ENCODE measurements at regions of chr5 and their contacts with region 1.

Region 1: GRCh38 chr5:166992874-166993722 is 1298.3 kb upstream of the WWC1 start:
- DNase-seq: no peak
- H3K4me3 ChIP-seq: peak overlapping the region in 3 of 4 donors; percentile 11 to 32 (median 12)
- H3K27ac ChIP-seq: peak overlapping the region; percentile 52 to 79 (median 68)
- H3K4me1 ChIP-seq: peaks cover 0 to 35% (median 29%) of the 10 kb centered on the region in 4 donors
- H3K27me3 ChIP-seq: no peaks in the 10 kb centered on the region
- CTCF ChIP-seq: no peak
- EP300 ChIP-seq: no peak
- POLR2A ChIP-seq: no peak

Region 2: DNA sequence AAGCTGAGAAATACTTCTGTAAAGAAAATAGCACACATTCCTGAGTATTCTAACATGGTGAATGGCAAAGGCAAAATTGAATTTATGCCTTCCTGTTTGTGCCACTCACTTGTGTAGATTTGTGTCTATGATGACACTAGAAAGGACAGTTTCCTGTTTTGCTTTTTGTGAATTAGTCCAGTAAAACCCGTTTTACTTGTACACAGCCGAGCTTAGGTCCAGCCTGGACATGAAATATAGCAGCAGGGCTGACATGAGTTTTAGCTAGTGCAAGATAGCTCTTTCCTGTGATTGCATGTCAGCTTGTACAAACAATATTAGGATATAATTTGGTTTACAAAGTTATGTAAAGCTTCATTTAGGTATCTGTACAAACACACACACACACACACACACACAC is 593.3 kb before region 1 on chr5:
- intact Hi-C with region 1: no loop called
- DNase-seq: no peak
- H3K4me3 ChIP-seq: no peak overlapping the region
- H3K27ac ChIP-seq: no peak overlapping the region
- H3K4me1 ChIP-seq: no peaks in the 10 kb centered on the region
- H3K27me3 ChIP-seq: no peaks in the 10 kb centered on the region
- CTCF ChIP-seq: no peak
- EP300 ChIP-seq: no peak
- POLR2A ChIP-seq: no peak

Region 3: DNA sequence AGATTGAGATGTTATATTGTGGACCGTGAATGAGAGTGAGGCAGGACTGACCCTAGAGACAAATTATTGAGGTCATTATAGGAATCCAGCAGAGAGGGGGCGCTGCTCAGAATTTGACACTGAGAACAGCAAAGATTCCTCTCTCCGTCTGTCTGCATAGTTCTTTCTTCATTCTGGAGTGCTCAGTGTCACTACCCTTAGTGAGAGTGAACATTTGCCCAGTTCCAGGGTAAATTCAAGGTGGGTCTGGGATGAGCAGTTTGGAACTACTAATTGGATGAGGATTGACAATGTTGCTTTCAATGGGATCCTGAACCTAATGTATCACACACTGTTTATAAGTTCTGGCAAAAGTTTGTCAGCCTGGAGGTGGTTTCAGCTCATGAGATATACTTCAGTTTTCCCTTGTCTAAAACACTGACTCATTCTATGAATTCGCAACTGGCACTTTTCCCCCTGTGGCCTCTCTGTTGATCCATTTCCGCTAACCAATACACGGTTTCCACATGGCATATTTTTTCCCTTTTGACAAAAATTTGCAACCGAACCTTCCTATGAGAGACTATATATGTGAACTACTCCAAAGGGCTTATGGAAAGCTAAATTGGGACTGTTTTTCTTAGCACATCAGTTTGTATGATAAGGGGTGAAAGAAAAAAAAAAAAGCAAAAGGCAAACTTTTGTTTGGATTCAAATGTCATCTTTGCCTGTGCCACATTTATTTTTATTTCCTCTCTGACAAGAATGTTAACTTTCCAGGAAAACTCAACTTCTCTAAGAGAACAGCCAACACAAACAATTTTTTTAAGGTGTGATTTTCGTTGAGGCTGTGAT is 57.7 kb after region 1 on chr5:
- intact Hi-C with region 1: loop called (anchors 5 kb)
- DNase-seq: no peak
- H3K4me3 ChIP-seq: no peak overlapping the region
- H3K27ac ChIP-seq: no peak overlapping the region
- H3K4me1 ChIP-seq: peaks cover 0 to 4% (median 0%) of the 10 kb centered on the region in 4 donors
- H3K27me3 ChIP-seq: no peaks in the 10 kb centered on the region
- CTCF ChIP-seq: no peak
- EP300 ChIP-seq: no peak
- POLR2A ChIP-seq: no peak

Measured in sigmoid colon (tissue), 7 donors.